ENCODE measurements at regions of chr3 and their contacts with region 1.

Region 1: DNA sequence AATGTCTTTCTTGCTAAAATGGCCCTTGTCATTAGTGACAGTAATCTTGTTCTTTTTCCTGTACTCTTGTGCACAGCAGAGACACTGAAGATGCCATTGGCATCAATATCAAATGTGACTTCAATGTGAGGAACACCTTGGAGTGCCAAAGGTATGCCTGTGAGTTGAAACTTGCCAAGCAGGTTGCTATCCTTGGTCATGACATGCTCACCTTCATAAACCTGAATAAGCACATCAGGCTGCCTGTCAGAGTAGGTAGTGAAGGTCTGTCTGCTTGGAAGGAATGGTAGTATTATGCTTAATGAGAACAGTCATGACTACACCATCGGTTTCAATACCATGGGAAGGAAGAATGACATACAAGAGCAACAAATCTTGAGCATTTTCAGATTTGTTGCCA is 6.3 kb upstream of the RAB5A start:
- DNase-seq: no peak
- ATAC-seq: no peak
- H3K4me3 ChIP-seq: no peak overlapping the region
- H3K27ac ChIP-seq: no peak overlapping the region
- H3K4me1 ChIP-seq: no peaks in the 10 kb centered on the region
- H3K27me3 ChIP-seq: no peaks in the 10 kb centered on the region
- CTCF ChIP-seq: no peak

Region 2: DNA sequence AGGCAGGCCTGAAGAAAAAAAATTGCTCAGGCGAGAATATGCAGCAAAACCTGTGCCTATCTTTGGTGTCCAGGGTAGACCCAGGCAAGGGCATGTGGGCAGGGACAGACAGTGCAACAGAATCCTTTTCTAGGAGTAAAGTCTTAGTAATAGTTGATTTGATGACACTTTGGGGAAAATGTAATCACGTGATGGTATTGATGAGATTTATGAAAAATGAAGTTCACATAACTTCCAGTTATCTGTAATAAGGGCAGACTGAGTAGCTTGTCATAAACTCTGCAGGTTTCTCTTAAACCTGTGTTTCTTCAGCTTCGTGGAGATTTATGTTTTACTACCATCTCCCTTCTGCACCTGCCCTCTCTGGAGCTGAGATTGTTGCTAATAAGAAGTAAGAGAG is 421.5 kb before region 1 on chr3:
- intact Hi-C with region 1: no loop called
- DNase-seq: no peak
- ATAC-seq: no peak
- H3K4me3 ChIP-seq: no peak overlapping the region
- H3K27ac ChIP-seq: no peak overlapping the region
- H3K4me1 ChIP-seq: no peaks in the 10 kb centered on the region
- H3K27me3 ChIP-seq: no peaks in the 10 kb centered on the region
- CTCF ChIP-seq: no peak

Region 3: DNA sequence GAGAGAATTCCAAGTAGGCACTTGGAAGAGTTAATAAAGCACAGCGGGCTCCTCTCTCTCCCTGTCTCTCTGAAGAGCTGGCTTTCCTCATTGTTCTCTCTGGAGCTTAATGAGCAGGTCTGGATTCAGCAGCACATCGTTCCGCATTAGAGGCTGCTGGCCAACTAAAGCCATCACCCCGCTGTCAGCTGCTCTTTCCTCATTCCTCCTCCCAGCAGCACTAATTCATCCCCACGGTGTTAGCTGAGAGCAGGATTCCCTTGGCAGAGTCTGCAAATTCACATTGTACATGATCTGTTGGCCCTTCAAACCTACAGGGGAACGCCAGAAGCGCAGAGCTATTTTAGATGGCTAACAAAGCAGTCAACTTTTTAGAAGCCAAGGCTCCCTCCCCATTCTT is 201.2 kb after region 1 on chr3:
- intact Hi-C with region 1: loop called in 1 of 2 experiments (anchors 5 kb)
- DNase-seq: peak; percentile 21 to 70
- ATAC-seq: peak; percentile 75 to 95 (median 91)
- H3K4me3 ChIP-seq: no peak overlapping the region
- H3K27ac ChIP-seq: no peak overlapping the region
- H3K4me1 ChIP-seq: no peaks in the 10 kb centered on the region
- H3K27me3 ChIP-seq: no peaks in the 10 kb centered on the region
- CTCF ChIP-seq: no peak

Region 4: GRCh38 chr3:21551019-21551418 is 1610.4 kb after region 1 on chr3:
- intact Hi-C with region 1: no loop called
- DNase-seq: no peak
- ATAC-seq: no peak
- H3K4me3 ChIP-seq: no peak overlapping the region
- H3K27ac ChIP-seq: no peak overlapping the region
- H3K4me1 ChIP-seq: no peaks in the 10 kb centered on the region
- H3K27me3 ChIP-seq: no peaks in the 10 kb centered on the region
- CTCF ChIP-seq: no peak